Activated CD4-positive, alpha-beta T cell treated with anti-CD3 and anti-CD28 coated beads for 36 hours (primary cell): ENCODE measurements at regions of chr22 and their contacts with region 1.

Region 1: GRCh38 chr22:38317122-38317994 is at the start of gene CSNK1E:
- DNase-seq: peak; percentile 84
- ATAC-seq: peak; percentile 63
- H3K4me3 Mint-ChIP-seq: peak within 1 kb of the TSS; percentile 90
- H3K27ac Mint-ChIP-seq: peak within 1 kb of the TSS; percentile 94
- H3K4me1 Mint-ChIP-seq: peaks cover 41% of the 10 kb centered on the region
- H3K27me3 Mint-ChIP-seq: no peaks in the 10 kb centered on the region
- total RNA-seq, gene CSNK1E: 117 to 145 TPM

Region 2: GRCh38 chr22:38305471-38306448 is 11.6 kb before region 1 on chr22:
- CTCF ChIA-PET with region 1: interaction called, 11 read pairs
- POLR2A ChIA-PET with region 1: interaction called, 5 read pairs
- intact Hi-C with region 1: no loop called
- DNase-seq: peak; percentile 67
- ATAC-seq: peak; percentile 92
- H3K4me3 Mint-ChIP-seq: peak overlapping the region; percentile 37
- H3K27ac Mint-ChIP-seq: peak overlapping the region; percentile 88
- H3K4me1 Mint-ChIP-seq: peaks cover 40% of the 10 kb centered on the region
- H3K27me3 Mint-ChIP-seq: no peaks in the 10 kb centered on the region

Region 3: DNA sequence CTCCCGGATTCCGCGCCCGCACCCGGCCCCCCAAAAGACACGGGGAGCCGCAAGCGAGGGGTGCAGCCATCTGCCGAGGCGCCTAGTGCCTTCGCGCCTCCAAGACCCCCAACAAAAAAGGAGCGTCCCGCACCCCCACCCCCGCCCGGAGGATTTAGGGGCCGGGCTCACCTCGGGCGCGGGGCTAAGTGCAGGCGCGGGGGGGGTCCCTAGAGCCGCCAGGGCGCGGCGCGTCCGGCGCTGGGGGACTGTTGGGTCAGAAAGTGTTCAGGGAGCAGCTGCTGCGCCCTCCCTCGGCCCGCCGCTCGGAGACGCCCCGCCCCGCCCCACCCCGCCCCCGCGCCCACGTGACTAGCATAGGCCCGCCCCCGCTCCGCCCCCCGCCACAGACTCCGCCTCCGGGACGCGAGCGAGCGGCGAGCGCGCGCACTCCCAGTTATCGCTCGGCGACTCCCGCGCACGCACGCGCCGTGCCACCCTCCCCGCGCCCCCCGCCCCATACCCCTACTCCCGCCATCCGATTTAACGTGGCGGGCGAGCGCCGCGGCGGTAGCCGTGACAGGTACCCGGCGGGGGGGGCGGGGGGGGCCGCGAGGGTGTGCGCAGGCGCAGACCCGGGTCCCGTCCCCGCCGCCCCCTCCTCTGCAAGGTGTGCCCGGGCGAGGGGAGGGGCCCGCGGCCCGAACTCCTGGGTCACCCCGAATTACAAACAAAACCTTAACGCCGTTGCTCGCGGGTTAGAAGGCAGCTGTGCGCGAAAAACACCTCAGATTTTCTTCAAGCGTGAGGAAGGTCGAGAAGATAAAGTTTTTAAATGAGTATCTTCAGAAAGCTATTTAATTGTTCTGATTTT is 81.5 kb after region 1 on chr22:
- CTCF ChIA-PET with region 1: no interaction called
- POLR2A ChIA-PET with region 1: interaction called, 3 read pairs
- intact Hi-C with region 1: loop called in 1 of 2 experiments (anchors 1 kb)
- DNase-seq: peak; percentile 92
- ATAC-seq: peak; percentile 67
- H3K4me3 Mint-ChIP-seq: peak overlapping the region; percentile 72
- H3K27ac Mint-ChIP-seq: peak overlapping the region; percentile 47
- H3K4me1 Mint-ChIP-seq: peaks cover 38% of the 10 kb centered on the region
- H3K27me3 Mint-ChIP-seq: no peaks in the 10 kb centered on the region